GM12878 (cell line): ENCODE measurements at regions of chr2 and their contacts with region 1.

Region 1: GRCh38 chr2:64523666-64524603 is at the start of gene AFTPH:
- DNase-seq: peak; percentile 98
- ATAC-seq: peak; percentile 86
- H3K4me3 ChIP-seq: peak within 1 kb of the TSS; percentile 95
- H3K27ac ChIP-seq: peak within 1 kb of the TSS; percentile 94
- H3K4me1 ChIP-seq: peaks cover 11% of the 10 kb centered on the region
- H3K27me3 ChIP-seq: no peaks in the 10 kb centered on the region
- CTCF ChIP-seq: no peak
- EP300 ChIP-seq: peak in 1 of 2 experiments; percentile 53; a peak in 2 of 4 replicates
- POLR2A ChIP-seq: peak; percentile 84
- RAD21 ChIP-seq: no peak
- polyA plus RNA-seq, gene AFTPH: 25.6 to 38.7 TPM

Region 2: GRCh38 chr2:64404002-64404731 is 119.8 kb before region 1 on chr2:
- CTCF ChIA-PET with region 1: no interaction called
- POLR2A ChIA-PET with region 1: no interaction called
- RAD21 ChIA-PET with region 1: no interaction called
- SMC1A ChIA-PET with region 1: no interaction called
- in situ Hi-C with region 1: no loop called
- intact Hi-C with region 1: no loop called
- DNase-seq: no peak
- ATAC-seq: no peak
- H3K4me3 ChIP-seq: no peak overlapping the region
- H3K27ac ChIP-seq: no peak overlapping the region
- H3K4me1 ChIP-seq: 0 out of 2 replicates have a peak, but pooled peaks cover 3% of the 10 kb centered on the region
- H3K27me3 ChIP-seq: no peaks in the 10 kb centered on the region
- CTCF ChIP-seq: no peak
- EP300 ChIP-seq: no peak
- POLR2A ChIP-seq: no peak
- RAD21 ChIP-seq: no peak

Region 3: GRCh38 chr2:64548761-64549160 is 24.8 kb after region 1 on chr2:
- CTCF ChIA-PET with region 1: interaction called, 18 read pairs
- POLR2A ChIA-PET with region 1: interaction called, 4 read pairs
- RAD21 ChIA-PET with region 1: interaction called, 12 read pairs
- SMC1A ChIA-PET with region 1: interaction called, 16 read pairs
- in situ Hi-C with region 1: no loop called
- intact Hi-C with region 1: no loop called
- DNase-seq: no peak
- ATAC-seq: no peak
- H3K4me3 ChIP-seq: no peak overlapping the region
- H3K27ac ChIP-seq: no peak overlapping the region
- H3K4me1 ChIP-seq: no peaks in the 10 kb centered on the region
- H3K27me3 ChIP-seq: no peaks in the 10 kb centered on the region
- CTCF ChIP-seq: no peak
- EP300 ChIP-seq: no peak
- POLR2A ChIP-seq: no peak
- RAD21 ChIP-seq: no peak

Region 4: GRCh38 chr2:64586883-64587481 is 63.0 kb after region 1 on chr2:
- CTCF ChIA-PET with region 1: interaction called, 64 read pairs
- POLR2A ChIA-PET with region 1: interaction called, 11 read pairs
- RAD21 ChIA-PET with region 1: interaction called, 34 read pairs
- SMC1A ChIA-PET with region 1: interaction called, 47 read pairs
- in situ Hi-C with region 1: no loop called
- intact Hi-C with region 1: loop called (anchors 1 kb)
- DNase-seq: no peak
- ATAC-seq: peak; percentile 30
- H3K4me3 ChIP-seq: no peak overlapping the region
- H3K27ac ChIP-seq: no peak overlapping the region
- H3K4me1 ChIP-seq: peaks cover 40% of the 10 kb centered on the region
- H3K27me3 ChIP-seq: no peaks in the 10 kb centered on the region
- CTCF ChIP-seq: peak; percentile 54 to 77 (median 63)
- EP300 ChIP-seq: no peak
- POLR2A ChIP-seq: no peak
- RAD21 ChIP-seq: peak; percentile 83

Region 5: GRCh38 chr2:64635976-64636911 is 112.3 kb after region 1 on chr2:
- CTCF ChIA-PET with region 1: interaction called, 9 read pairs
- POLR2A ChIA-PET with region 1: no interaction called
- RAD21 ChIA-PET with region 1: interaction called, 40 read pairs
- SMC1A ChIA-PET with region 1: interaction called, 3 read pairs
- in situ Hi-C with region 1: no loop called
- intact Hi-C with region 1: loop called (anchors 2 kb)
- DNase-seq: peak; percentile 71
- ATAC-seq: peak; percentile 79
- H3K4me3 ChIP-seq: peak overlapping the region; percentile 56; the same call in 1 of the 2 replicates
- H3K27ac ChIP-seq: peak overlapping the region; percentile 95
- H3K4me1 ChIP-seq: peaks cover 58% of the 10 kb centered on the region
- H3K27me3 ChIP-seq: no peaks in the 10 kb centered on the region
- CTCF ChIP-seq: no peak
- EP300 ChIP-seq: peak; percentile 23 to 31; a peak in 1 of 4 replicates
- POLR2A ChIP-seq: peak; percentile 52
- RAD21 ChIP-seq: 0 out of 2 replicates have a peak, but pooled peaks have one; percentile 5

Region 6: GRCh38 chr2:64704161-64704560 is 180.2 kb after region 1 on chr2:
- CTCF ChIA-PET with region 1: interaction called, 4 read pairs
- POLR2A ChIA-PET with region 1: interaction called, 4 read pairs
- RAD21 ChIA-PET with region 1: interaction called, 4 read pairs
- SMC1A ChIA-PET with region 1: interaction called, 12 read pairs
- in situ Hi-C with region 1: no loop called
- intact Hi-C with region 1: loop called (anchors 2 kb)
- DNase-seq: no peak
- ATAC-seq: peak; percentile 14
- H3K4me3 ChIP-seq: 0 out of 2 replicates have a peak overlapping the region, but pooled peaks have one; percentile 7
- H3K27ac ChIP-seq: peak overlapping the region; percentile 54
- H3K4me1 ChIP-seq: peaks cover 30% of the 10 kb centered on the region
- H3K27me3 ChIP-seq: no peaks in the 10 kb centered on the region
- CTCF ChIP-seq: no peak
- EP300 ChIP-seq: no peak
- POLR2A ChIP-seq: no peak
- RAD21 ChIP-seq: no peak

Region 7: DNA sequence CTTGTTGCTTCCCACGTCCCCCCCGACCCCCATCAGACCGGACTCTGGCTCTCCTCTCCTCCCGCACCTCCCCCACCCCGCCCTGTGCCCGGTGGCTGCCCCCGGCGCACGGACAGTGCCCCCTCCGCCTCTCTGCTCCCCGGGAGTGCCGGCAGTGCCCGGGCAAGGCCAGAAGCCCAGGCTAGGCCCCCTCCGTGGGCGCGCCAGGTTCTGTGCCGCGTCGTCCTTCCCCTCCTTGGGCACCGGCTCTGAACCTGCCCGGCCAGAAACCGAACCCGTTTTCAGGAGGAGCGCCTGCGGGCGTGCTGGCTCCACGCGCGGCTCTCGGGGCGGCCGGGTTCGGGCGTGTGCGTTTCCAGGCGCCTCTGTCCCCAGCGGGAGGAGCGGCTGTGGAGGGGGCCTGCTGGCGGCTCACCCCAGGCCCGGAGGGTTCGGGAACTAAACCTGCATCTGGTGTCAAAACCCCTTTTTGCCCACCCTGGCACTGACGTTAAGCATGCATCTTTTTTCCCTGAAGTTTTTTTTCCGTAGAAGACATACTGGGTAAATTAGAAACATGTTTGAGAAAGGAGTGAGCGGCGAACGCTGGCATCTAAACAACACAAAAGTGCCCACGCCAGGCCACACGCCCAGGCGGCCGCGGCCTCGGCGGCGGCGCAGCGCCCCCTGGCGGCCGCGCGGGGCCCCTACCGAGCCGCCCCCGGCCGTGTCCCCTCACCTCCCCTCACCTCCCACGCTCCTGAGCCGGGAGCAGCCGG is 341.3 kb after region 1 on chr2:
- CTCF ChIA-PET with region 1: interaction called, 30 read pairs
- POLR2A ChIA-PET with region 1: interaction called, 3 read pairs
- RAD21 ChIA-PET with region 1: interaction called, 19 read pairs
- SMC1A ChIA-PET with region 1: interaction called, 52 read pairs
- in situ Hi-C with region 1: loop called (anchors 5 kb)
- intact Hi-C with region 1: loop called (anchors 2 kb)
- DNase-seq: no peak
- ATAC-seq: peak; percentile 84
- H3K4me3 ChIP-seq: peak overlapping the region; percentile 82
- H3K27ac ChIP-seq: peak overlapping the region; percentile 70
- H3K4me1 ChIP-seq: peaks cover 49% of the 10 kb centered on the region
- H3K27me3 ChIP-seq: no peaks in the 10 kb centered on the region
- CTCF ChIP-seq: peak; percentile 62 to 79 (median 64); a peak in 5 of 6 replicates
- EP300 ChIP-seq: no peak
- POLR2A ChIP-seq: no peak
- RAD21 ChIP-seq: peak; percentile 71